Mammary epithelial cell (primary cell): ENCODE measurements at regions of chr7 and their contacts with region 1.

Region 1: GRCh38 chr7:106071356-106071998 is 40.6 kb downstream of the SYPL1 start:
- DNase-seq: no peak
- H3K4me3 ChIP-seq: no peak overlapping the region
- H3K27ac ChIP-seq: peak overlapping the region; percentile 48
- H3K4me1 ChIP-seq: peaks cover 55% of the 10 kb centered on the region
- H3K27me3 ChIP-seq: no peaks in the 10 kb centered on the region
- CTCF ChIP-seq: no peak

Region 2: GRCh38 chr7:105990726-105991453 is 80.6 kb before region 1 on chr7:
- CTCF ChIA-PET with region 1: no interaction called
- dilution Hi-C with region 1: no loop called
- in situ Hi-C with region 1: no loop called
- intact Hi-C with region 1: no loop called
- DNase-seq: no peak
- H3K4me3 ChIP-seq: no peak overlapping the region
- H3K27ac ChIP-seq: no peak overlapping the region
- H3K4me1 ChIP-seq: no peaks in the 10 kb centered on the region
- H3K27me3 ChIP-seq: peaks cover 5% of the 10 kb centered on the region
- CTCF ChIP-seq: no peak

Region 3: GRCh38 chr7:106009403-106010226 is 61.9 kb before region 1 on chr7:
- CTCF ChIA-PET with region 1: no interaction called
- dilution Hi-C with region 1: no loop called
- in situ Hi-C with region 1: no loop called
- intact Hi-C with region 1: no loop called
- DNase-seq: peak; percentile 88
- H3K4me3 ChIP-seq: no peak overlapping the region
- H3K27ac ChIP-seq: no peak overlapping the region
- H3K4me1 ChIP-seq: peaks cover 8% of the 10 kb centered on the region
- H3K27me3 ChIP-seq: no peaks in the 10 kb centered on the region
- CTCF ChIP-seq: peak; percentile 74 to 96

Region 4: GRCh38 chr7:106143711-106144337 is 72.3 kb after region 1 on chr7:
- CTCF ChIA-PET with region 1: interaction called, 12 read pairs
- dilution Hi-C with region 1: loop called (anchors 5 kb)
- in situ Hi-C with region 1: no loop called
- intact Hi-C with region 1: no loop called
- DNase-seq: no peak
- H3K4me3 ChIP-seq: no peak overlapping the region
- H3K27ac ChIP-seq: no peak overlapping the region
- H3K4me1 ChIP-seq: no peaks in the 10 kb centered on the region
- H3K27me3 ChIP-seq: no peaks in the 10 kb centered on the region
- CTCF ChIP-seq: no peak